ENCODE measurements at regions of chr11 and their contacts with region 1.

Region 1: DNA sequence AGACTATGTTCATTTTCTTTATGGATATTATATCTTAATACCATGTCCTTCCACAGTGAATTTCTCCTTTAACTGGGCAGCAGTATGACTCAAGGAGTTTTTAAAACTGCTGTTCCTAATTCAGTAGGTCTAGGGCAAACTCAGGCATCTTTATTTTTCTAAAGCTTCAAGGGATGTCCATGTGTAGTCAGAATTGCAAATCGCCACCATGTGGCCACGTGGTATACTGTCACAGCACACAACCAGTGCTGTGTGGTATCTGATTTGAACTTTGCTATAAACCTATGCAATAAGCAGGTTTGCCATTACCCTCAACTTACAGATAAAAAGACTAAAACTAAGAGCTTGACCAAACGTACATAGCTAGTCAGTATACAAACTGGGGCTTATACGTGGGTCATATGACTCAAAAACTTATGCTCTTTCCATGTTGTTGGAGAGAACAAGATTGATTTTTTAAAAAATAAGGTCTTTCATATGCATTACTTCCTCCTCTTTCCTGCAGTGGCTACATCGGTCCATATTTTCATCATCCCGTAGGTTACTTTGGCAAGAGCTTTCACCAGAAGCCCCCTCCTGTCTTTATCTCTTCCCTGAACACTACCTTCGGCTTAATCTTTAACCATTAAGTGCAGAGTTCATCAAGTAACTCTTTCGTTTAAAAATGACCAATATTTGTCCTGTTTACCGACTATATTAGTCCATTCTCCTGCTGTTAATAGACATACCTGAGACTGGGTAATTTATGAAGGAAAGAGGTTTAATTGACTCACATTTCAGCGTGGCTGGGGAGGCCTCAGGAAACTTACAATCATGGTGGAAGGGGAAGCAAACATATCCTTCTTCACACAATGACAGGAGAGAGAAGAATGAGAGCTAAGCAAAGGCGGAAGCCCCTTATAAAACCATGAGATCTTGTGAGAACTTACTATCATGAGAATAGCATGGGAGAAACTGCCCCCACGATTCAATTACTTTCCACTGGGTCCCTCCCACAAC is 8.0 kb upstream of the HTATIP2 start:
- DNase-seq: no peak
- H3K4me3 ChIP-seq: no peak overlapping the region
- H3K27me3 ChIP-seq: peaks cover 5% of the 10 kb centered on the region
- CTCF ChIP-seq: peak; percentile 78

Region 2: GRCh38 chr11:20342347-20343141 is 13.0 kb before region 1 on chr11:
- CTCF ChIA-PET with region 1: interaction called, 46 read pairs
- POLR2A ChIA-PET with region 1: no interaction called
- DNase-seq: no peak
- H3K4me3 ChIP-seq: no peak overlapping the region
- H3K27me3 ChIP-seq: peaks cover 11% of the 10 kb centered on the region
- CTCF ChIP-seq: no peak

Region 3: DNA sequence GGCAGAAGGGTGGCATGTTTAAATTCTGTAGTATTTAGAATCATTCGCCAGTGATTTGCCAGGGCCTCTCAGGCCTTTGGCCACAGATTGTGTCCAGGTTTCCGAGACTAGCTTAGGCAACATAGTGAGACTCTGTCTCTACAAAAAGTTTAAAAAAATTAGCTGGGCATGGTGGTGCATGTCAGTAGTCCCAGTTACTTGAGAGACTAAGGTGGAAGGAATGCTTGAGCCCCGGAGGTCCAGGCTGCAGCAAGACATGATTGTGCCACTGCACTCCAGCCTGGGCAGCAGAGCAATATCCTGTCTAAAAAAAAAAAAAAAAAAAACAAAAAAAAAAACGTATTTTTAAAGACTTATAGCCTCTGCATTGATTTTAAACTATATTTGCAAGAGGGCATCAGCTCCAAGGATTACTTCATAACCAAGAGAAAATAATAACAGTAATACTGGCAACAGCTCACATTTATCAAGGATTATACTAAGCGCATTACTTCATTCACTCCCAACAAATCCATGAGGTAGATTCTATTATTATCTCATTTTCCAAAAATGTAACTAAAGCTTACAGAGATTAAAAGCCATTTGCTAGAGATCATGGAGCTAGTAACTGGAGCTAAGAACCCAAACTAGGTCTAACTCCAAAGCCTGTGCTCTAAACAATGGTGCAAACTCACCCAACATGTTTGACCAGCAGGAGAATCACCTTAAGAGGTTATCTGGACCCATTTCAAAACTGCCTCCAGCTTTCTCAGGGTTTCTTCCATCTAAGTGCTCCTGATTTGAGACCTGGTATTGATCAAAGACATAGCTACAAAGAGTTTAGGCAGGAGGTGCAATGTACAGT is 211.3 kb after region 1 on chr11:
- CTCF ChIA-PET with region 1: no interaction called
- POLR2A ChIA-PET with region 1: interaction called, 12 read pairs
- DNase-seq: no peak
- H3K4me3 ChIP-seq: no peak overlapping the region
- H3K27me3 ChIP-seq: no peaks in the 10 kb centered on the region
- CTCF ChIP-seq: no peak